H1 (cell line): ENCODE measurements at regions of chr12 and their contacts with region 1.

Region 1: GRCh38 chr12:30847259-30847658 is 79.3 kb upstream of the TSPAN11 start:
- DNase-seq: no peak
- H3K4me3 ChIP-seq: no peak overlapping the region
- H3K27ac ChIP-seq: no peak overlapping the region
- H3K4me1 ChIP-seq: peaks cover 0 to 4% (median 2%) of the 10 kb centered on the region in 4 experiments; a peak in 2 of 7 replicates
- H3K27me3 ChIP-seq: no peaks in the 10 kb centered on the region; a peak in 1 of 7 replicates
- CTCF ChIP-seq: peak in 2 of 3 experiments; percentile 56 to 76; a peak in 2 of 4 replicates
- EP300 ChIP-seq: no peak
- POLR2A ChIP-seq: no peak
- RAD21 ChIP-seq: peak; percentile 90 to 91

Region 2: GRCh38 chr12:30822385-30823155 is 24.7 kb before region 1 on chr12:
- CTCF ChIA-PET with region 1: interaction called, 13 read pairs
- POLR2A ChIA-PET with region 1: interaction called, 3 read pairs
- DNase-seq: peak in 1 of 2 experiments; percentile 79
- H3K4me3 ChIP-seq: peak overlapping the region; percentile 47 to 63 (median 59)
- H3K27ac ChIP-seq: no peak overlapping the region
- H3K4me1 ChIP-seq: peaks cover 0 to 6% (median 3%) of the 10 kb centered on the region in 4 experiments; a peak in 6 of 7 replicates
- H3K27me3 ChIP-seq: peaks cover 0 to 20% (median 17%) of the 10 kb centered on the region in 4 experiments; a peak in 6 of 7 replicates
- CTCF ChIP-seq: peak in 2 of 3 experiments; percentile 9 to 10; a peak in 1 of 4 replicates
- EP300 ChIP-seq: no peak
- POLR2A ChIP-seq: no peak
- RAD21 ChIP-seq: peak in 1 of 2 experiments; percentile 21; a peak in 1 of 4 replicates

Region 3: GRCh38 chr12:30882706-30883105 is 35.4 kb after region 1 on chr12:
- CTCF ChIA-PET with region 1: interaction called, 10 read pairs
- POLR2A ChIA-PET with region 1: no interaction called
- DNase-seq: no peak
- H3K4me3 ChIP-seq: no peak overlapping the region
- H3K27ac ChIP-seq: no peak overlapping the region
- H3K4me1 ChIP-seq: no peaks in the 10 kb centered on the region
- H3K27me3 ChIP-seq: peaks cover 0 to 5% (median 0%) of the 10 kb centered on the region in 4 experiments; a peak in 1 of 7 replicates
- CTCF ChIP-seq: peak in 1 of 3 experiments; percentile 13; a peak in 1 of 4 replicates
- EP300 ChIP-seq: no peak
- POLR2A ChIP-seq: no peak
- RAD21 ChIP-seq: peak; percentile 35 to 45

Region 4: DNA sequence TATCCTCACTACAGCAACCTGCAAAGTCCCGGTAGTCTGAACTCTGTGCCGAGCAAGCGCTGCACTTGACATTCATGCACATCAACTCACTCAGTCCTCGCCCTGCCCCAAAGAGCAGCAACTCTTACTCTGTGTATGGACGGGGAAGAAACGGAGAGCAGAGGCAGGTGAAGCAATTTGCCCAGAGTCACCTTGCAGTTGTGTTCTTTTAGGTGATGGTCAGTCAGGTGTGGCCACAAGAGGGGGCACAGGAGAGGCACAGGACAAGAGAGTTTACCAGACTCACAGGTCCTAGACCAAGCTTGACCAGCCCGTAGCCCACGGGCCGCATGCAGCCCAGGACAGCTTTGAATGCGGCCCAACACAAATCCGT is 118.3 kb after region 1 on chr12:
- CTCF ChIA-PET with region 1: interaction called, 34 read pairs
- POLR2A ChIA-PET with region 1: no interaction called
- DNase-seq: peak in 1 of 2 experiments; percentile 57
- H3K4me3 ChIP-seq: no peak overlapping the region
- H3K27ac ChIP-seq: no peak overlapping the region
- H3K4me1 ChIP-seq: no peaks in the 10 kb centered on the region
- H3K27me3 ChIP-seq: peaks cover 0 to 5% (median 0%) of the 10 kb centered on the region in 4 experiments; a peak in 2 of 7 replicates
- CTCF ChIP-seq: peak; percentile 63 to 79 (median 76)
- EP300 ChIP-seq: no peak
- POLR2A ChIP-seq: no peak
- RAD21 ChIP-seq: peak; percentile 52 to 67

Region 5: GRCh38 chr12:30985814-30986452 is 138.7 kb after region 1 on chr12:
- CTCF ChIA-PET with region 1: interaction called, 385 read pairs
- POLR2A ChIA-PET with region 1: interaction called, 4 read pairs
- DNase-seq: peak; percentile 44 to 85
- H3K4me3 ChIP-seq: no peak overlapping the region
- H3K27ac ChIP-seq: no peak overlapping the region
- H3K4me1 ChIP-seq: peaks cover 0 to 7% (median under 1%) of the 10 kb centered on the region in 4 experiments; a peak in 3 of 7 replicates
- H3K27me3 ChIP-seq: no peaks in the 10 kb centered on the region
- CTCF ChIP-seq: peak; percentile 90 to 94 (median 94)
- EP300 ChIP-seq: no peak
- POLR2A ChIP-seq: no peak
- RAD21 ChIP-seq: peak; percentile 92 to 94

Region 6: DNA sequence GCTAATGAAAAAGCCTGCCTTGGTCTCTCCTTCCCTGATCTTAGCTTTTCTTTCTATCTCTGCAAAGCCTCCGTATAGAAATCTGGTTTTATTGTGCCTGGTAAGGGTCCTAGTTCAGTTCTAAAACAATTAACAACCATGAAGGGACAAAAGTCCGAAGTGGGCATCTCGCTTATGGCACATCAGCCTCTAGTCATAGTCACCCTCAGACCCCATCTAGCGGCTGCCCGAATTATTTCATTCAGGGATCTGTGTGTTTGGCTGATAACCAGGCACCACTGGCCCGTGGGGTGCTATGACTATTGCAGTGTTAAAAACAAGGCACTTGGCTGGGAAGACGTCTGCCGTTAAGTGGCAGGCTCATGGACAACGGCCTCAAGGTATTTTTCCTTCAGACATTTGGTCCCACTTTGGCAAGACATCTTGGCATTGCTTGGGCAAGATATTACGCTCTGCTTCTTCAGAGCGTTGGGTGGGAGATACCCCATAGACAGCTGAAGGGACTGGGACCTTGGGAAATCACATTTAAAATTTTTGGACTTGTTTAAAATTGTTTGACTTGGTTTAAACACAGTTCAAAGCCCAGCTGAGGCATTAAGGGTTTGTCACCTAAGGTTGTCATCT is 391.6 kb after region 1 on chr12:
- CTCF ChIA-PET with region 1: interaction called, 13 read pairs
- POLR2A ChIA-PET with region 1: no interaction called
- DNase-seq: peak in 1 of 2 experiments; percentile 78
- H3K4me3 ChIP-seq: no peak overlapping the region
- H3K27ac ChIP-seq: no peak overlapping the region
- H3K4me1 ChIP-seq: peaks cover 0 to 5% (median 3%) of the 10 kb centered on the region in 4 experiments; a peak in 5 of 7 replicates
- H3K27me3 ChIP-seq: no peaks in the 10 kb centered on the region
- CTCF ChIP-seq: peak; percentile 62 to 78 (median 76)
- EP300 ChIP-seq: no peak
- POLR2A ChIP-seq: no peak
- RAD21 ChIP-seq: peak; percentile 60 to 79